ENCODE measurements at regions of chr11 and their contacts with region 1.

Region 1: GRCh38 chr11:129973068-129973467 is 29.6 kb downstream of the PRDM10 start:
- DNase-seq: no peak
- ATAC-seq: no peak
- H3K4me3 ChIP-seq: no peak overlapping the region
- H3K27ac ChIP-seq: no peak overlapping the region
- H3K4me1 ChIP-seq: peaks cover 26% of the 10 kb centered on the region
- H3K27me3 ChIP-seq: no peaks in the 10 kb centered on the region
- CTCF ChIP-seq: no peak
- EP300 ChIP-seq: no peak
- POLR2A ChIP-seq: no peak
- RAD21 ChIP-seq: no peak

Region 2: DNA sequence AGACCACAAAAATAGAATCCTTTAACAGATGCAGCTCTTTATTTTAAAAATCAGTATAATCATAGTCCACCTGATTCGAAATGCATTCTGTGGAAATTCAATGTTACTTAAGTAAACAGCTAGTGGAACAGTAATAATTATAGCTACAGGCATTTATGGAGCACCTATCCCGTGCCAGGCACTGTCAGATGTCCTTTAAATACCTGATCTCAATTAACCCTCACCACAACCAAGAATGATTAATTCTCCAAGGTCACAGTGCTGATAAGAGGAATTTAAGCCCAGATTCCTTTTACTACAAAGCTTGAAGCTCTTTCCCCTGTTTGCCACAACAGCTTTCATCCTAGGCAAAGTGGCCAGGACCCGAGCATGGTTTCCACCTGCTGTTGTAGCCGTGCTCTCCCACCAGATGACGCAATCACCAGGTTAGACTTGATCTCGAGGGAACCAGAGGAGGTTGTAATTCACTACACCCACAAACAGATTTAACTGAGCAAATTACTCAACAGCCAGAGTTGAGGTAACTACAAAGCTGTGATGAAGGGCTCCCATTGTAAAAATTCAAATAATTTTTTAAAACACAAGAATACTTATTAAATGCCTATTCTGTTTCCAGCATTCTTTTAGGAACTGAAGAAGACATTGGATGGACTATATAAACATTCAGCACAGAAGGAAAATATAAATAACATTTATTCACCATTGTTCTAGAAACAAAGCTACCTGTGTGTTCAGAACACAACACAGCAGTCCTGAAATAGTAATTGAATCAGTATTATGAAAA is 19.3 kb after region 1 on chr11:
- CTCF ChIA-PET with region 1: no interaction called
- POLR2A ChIA-PET with region 1: interaction called, 3 read pairs
- in situ Hi-C with region 1: no loop called
- intact Hi-C with region 1: loop called (anchors 1 kb)
- DNase-seq: peak; percentile 82
- ATAC-seq: peak; percentile 90
- H3K4me3 ChIP-seq: no peak overlapping the region
- H3K27ac ChIP-seq: peak overlapping the region; percentile 3
- H3K4me1 ChIP-seq: peaks cover 47% of the 10 kb centered on the region
- H3K27me3 ChIP-seq: no peaks in the 10 kb centered on the region
- CTCF ChIP-seq: peak; percentile 84
- EP300 ChIP-seq: no peak
- POLR2A ChIP-seq: no peak
- RAD21 ChIP-seq: peak; percentile 53